Right ventricle myocardium superior (tissue), 1 donor: ENCODE measurements at regions of chr12 and their contacts with region 1.

Region 1: GRCh38 chr12:80763874-80764273 is 47.2 kb downstream of the MYF5 start:
- DNase-seq: no peak
- ATAC-seq: no peak

Region 2: GRCh38 chr12:80412369-80412953 is 351.4 kb before region 1 on chr12:
- intact Hi-C with region 1: loop called (anchors 10 kb)
- DNase-seq: no peak
- ATAC-seq: peak; percentile 61

Region 3: GRCh38 chr12:80472902-80473500 is 290.9 kb before region 1 on chr12:
- intact Hi-C with region 1: loop called (anchors 10 kb)
- DNase-seq: no peak
- ATAC-seq: no peak